ENCODE measurements at regions of chr10 and their contacts with region 1.

Region 1: GRCh38 chr10:46318799-46319198 is 32.0 kb downstream of the ANTXRL start:
- DNase-seq: no peak
- ATAC-seq: no peak
- H3K4me3 ChIP-seq: no peak overlapping the region
- H3K27ac ChIP-seq: no peak overlapping the region
- H3K4me1 ChIP-seq: peaks cover 0 to 5% of the 10 kb centered on the region in 2 experiments; a peak in 1 of 5 replicates
- H3K27me3 ChIP-seq: peaks cover 7 to 30% of the 10 kb centered on the region in 2 experiments; a peak in 4 of 5 replicates
- CTCF ChIP-seq: no peak
- EP300 ChIP-seq: no peak
- POLR2A ChIP-seq: no peak
- RAD21 ChIP-seq: no peak

Region 2: DNA sequence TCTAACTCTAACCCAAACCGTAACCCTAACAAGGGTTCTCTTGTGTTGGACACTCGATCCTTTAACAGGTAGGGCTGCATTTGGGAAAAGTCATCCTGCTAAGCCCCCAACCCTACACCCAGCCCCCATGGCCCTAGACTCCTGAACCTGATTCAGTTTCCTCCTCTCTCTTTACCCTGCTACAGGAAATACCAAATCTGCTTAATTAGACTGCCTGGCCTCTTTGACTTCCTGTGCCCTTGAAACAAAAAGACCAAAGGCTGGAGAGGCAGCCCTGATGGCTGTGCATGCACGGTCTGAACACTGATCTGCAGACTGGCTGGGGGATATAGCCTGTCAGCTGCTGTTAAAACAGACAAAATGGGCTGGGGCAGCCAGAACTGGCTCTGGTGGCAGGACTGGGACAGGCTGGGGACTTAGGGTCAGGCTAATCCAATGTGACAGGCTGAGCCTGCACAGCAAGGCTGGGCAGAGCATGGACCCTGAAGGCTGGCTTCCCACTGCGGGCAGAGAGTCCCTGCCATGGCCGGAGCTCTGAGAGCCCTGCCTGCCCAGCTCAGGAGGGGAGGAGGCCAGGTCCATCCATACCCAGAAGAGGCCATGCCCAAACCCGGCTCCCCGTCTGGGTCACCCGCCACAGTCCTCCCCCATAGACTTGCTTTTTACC is 221.8 kb before region 1 on chr10:
- CTCF ChIA-PET with region 1: no interaction called
- POLR2A ChIA-PET with region 1: no interaction called
- in situ Hi-C with region 1: no loop called
- intact Hi-C with region 1: no loop called
- DNase-seq: no peak
- ATAC-seq: no peak
- H3K4me3 ChIP-seq: no peak overlapping the region
- H3K27ac ChIP-seq: no peak overlapping the region
- H3K4me1 ChIP-seq: peaks cover 0 to 15% of the 10 kb centered on the region in 2 experiments; a peak in 4 of 5 replicates
- H3K27me3 ChIP-seq: peaks cover 0 to 27% of the 10 kb centered on the region in 2 experiments; a peak in 3 of 5 replicates
- CTCF ChIP-seq: no peak
- EP300 ChIP-seq: no peak
- POLR2A ChIP-seq: no peak
- RAD21 ChIP-seq: no peak

Region 3: DNA sequence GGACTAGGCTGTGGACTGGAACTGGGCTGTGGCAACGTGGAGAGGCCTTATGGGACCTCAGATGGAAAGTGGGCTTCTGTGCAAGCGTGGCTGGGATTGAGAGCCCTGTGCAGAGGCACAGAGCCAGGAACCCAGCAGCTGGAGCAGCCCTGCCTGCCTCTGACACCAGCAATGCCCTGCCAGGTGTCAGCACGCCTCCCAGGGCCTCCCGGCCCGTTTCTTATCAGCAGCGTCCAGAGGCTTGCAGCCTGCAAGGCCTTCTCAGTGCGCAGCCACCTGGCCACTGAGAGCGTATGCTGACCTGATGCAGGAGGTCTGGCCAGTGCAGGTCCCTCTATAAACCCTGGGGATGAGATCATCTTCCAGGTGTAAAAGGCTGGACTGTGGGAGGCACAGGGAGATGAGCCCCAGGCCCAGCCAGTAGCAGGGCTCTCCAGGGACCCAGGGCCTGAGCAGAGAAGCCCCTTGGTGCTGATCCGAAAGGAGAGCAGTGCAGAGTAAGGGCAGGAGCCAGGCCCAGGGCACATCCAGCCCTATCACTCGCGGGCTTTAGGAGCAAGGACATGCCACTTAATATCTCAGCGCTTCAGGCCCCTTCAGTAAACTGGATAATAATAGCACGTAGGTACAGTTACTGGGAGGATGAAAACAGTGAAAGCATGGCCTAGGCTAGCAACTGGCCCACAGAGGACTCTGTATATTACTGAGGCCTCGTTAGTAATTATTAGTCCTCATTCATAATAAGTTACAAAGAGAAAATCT is 70.8 kb before region 1 on chr10:
- CTCF ChIA-PET with region 1: no interaction called
- POLR2A ChIA-PET with region 1: no interaction called
- in situ Hi-C with region 1: loop called (anchors 5 kb)
- intact Hi-C with region 1: no loop called
- DNase-seq: peak; percentile 68 to 76 (median 72)
- ATAC-seq: peak; percentile 87
- H3K4me3 ChIP-seq: no peak overlapping the region
- H3K27ac ChIP-seq: no peak overlapping the region
- H3K4me1 ChIP-seq: peaks cover 2 to 5% of the 10 kb centered on the region in 2 experiments; a peak in 3 of 5 replicates
- H3K27me3 ChIP-seq: peaks cover 8 to 55% of the 10 kb centered on the region in 2 experiments; a peak in 4 of 5 replicates
- CTCF ChIP-seq: no peak
- EP300 ChIP-seq: no peak
- POLR2A ChIP-seq: no peak
- RAD21 ChIP-seq: no peak

Region 4: GRCh38 chr10:46284293-46285229 is 34.2 kb before region 1 on chr10:
- CTCF ChIA-PET with region 1: no interaction called
- POLR2A ChIA-PET with region 1: no interaction called
- in situ Hi-C with region 1: no loop called
- intact Hi-C with region 1: no loop called
- DNase-seq: peak; percentile 95 to 100 (median 99)
- ATAC-seq: peak; percentile 99
- H3K4me3 ChIP-seq: peak overlapping the region; percentile 61
- H3K27ac ChIP-seq: peak overlapping the region; percentile 21; the same call in 2 of the 3 replicates
- H3K4me1 ChIP-seq: peaks cover 2 to 22% of the 10 kb centered on the region in 2 experiments; a peak in 3 of 5 replicates
- H3K27me3 ChIP-seq: peaks cover 32 to 57% of the 10 kb centered on the region in 2 experiments; a peak in 4 of 5 replicates
- CTCF ChIP-seq: peak in 1 of 3 experiments; percentile 1; a peak in 1 of 6 replicates
- EP300 ChIP-seq: 0 out of 2 replicates have a peak, but pooled peaks have one; percentile 2
- POLR2A ChIP-seq: peak; percentile 46; the same call in 1 of the 2 replicates
- RAD21 ChIP-seq: peak in 1 of 2 experiments; percentile 10; a peak in 1 of 4 replicates

Measured in K562 (cell line).